ENCODE measurements at regions of chr4 and their contacts with region 1.

Region 1: DNA sequence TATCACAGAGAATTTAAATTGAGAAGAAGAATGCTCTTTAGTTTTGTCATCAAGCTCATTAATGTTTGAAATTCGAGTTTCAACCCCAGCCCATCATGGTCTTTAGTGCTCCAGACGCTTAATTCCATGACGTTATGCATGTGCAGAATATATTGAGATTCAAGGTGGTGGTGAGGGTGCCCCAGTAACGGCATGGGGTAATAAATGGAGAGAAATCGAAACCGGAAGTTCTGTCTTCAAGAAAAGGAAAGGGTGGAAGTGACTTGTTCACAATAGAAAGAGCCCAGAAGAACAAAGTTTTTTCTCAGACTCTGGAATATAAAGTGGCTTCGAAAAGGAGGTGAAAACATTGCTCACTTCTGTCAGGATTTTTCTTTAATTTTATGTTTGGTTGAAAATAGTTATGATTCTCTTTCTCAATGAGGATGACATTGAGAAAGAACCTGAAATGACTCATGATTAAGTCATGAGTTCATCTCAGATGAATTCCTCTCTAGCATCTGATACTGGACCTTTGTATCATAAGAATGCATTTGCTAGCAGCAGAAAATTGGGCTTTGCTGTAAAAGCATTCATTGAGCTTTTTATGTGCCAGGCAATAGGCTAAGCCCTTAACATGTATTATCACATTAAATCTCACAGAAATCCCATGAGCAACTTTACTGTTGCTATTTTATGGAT is 779 bp upstream of the DDX60L start:
- DNase-seq: peak in 34 of 35 experiments; percentile 9 to 83 (median 42)
- ATAC-seq: peak; percentile 58 to 70 (median 64)
- H3K4me3 ChIP-seq: peak overlapping the region; percentile 94 to 97
- H3K4me3 Mint-ChIP-seq: peak overlapping the region; percentile 95 to 100 (median 99)
- H3K27ac ChIP-seq: peak overlapping the region; percentile 91
- H3K27ac Mint-ChIP-seq: peak overlapping the region; percentile 100
- H3K4me1 ChIP-seq: peaks cover 11 to 36% of the 10 kb centered on the region in 2 experiments
- H3K4me1 Mint-ChIP-seq: peaks cover 64 to 77% (median 74%) of the 10 kb centered on the region in 3 donors
- H3K27me3 ChIP-seq: no peaks in the 10 kb centered on the region
- H3K27me3 Mint-ChIP-seq: no peaks in the 10 kb centered on the region

Region 2: DNA sequence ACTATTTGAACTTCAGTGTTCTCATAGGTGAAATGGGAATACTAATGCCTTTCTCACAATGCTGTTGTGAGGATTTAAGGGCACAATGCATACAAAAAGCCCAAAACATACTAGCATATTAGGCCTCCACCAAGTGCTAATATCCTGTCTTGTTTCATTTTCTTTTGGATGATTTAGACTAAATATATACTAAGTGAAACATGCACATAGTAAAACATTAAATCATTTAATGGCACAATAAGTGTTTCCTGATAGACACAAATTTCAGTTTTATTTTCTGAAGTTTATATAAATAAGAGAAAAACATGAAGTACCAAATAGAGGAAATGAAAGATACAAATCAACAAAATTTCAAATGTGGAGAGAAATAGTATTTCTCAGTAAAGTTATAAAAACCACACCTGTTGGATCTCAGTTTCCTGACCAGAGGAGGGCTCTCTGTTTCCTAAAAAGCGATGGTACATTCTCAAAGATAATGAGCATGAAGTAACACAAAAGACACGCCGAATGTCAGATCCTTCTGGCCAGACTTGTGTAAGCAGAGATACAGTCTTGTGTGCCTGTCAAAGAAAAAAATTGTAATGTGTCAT is 187.6 kb before region 1 on chr4:
- CTCF ChIA-PET with region 1: no interaction called
- POLR2A ChIA-PET with region 1: no interaction called
- DNase-seq: no peak
- ATAC-seq: no peak
- H3K4me3 ChIP-seq: no peak overlapping the region
- H3K4me3 Mint-ChIP-seq: no peak overlapping the region
- H3K27ac ChIP-seq: no peak overlapping the region
- H3K27ac Mint-ChIP-seq: no peak overlapping the region
- H3K4me1 ChIP-seq: no peaks in the 10 kb centered on the region
- H3K4me1 Mint-ChIP-seq: peaks cover 4 to 18% (median 9%) of the 10 kb centered on the region in 3 donors
- H3K27me3 ChIP-seq: no peaks in the 10 kb centered on the region
- H3K27me3 Mint-ChIP-seq: no peaks in the 10 kb centered on the region

Region 3: GRCh38 chr4:168514249-168514852 is 33.3 kb after region 1 on chr4:
- CTCF ChIA-PET with region 1: interaction called in 1 of 2 experiments, 18 read pairs
- POLR2A ChIA-PET with region 1: interaction called, 3 to 7 read pairs
- DNase-seq: peak in 1 of 35 experiments; percentile 60
- ATAC-seq: no peak
- H3K4me3 ChIP-seq: no peak overlapping the region
- H3K4me3 Mint-ChIP-seq: no peak overlapping the region
- H3K27ac ChIP-seq: no peak overlapping the region
- H3K27ac Mint-ChIP-seq: no peak overlapping the region
- H3K4me1 ChIP-seq: peaks cover 13 to 24% of the 10 kb centered on the region in 2 experiments
- H3K4me1 Mint-ChIP-seq: peaks cover 25 to 36% (median 29%) of the 10 kb centered on the region in 3 donors
- H3K27me3 ChIP-seq: no peaks in the 10 kb centered on the region
- H3K27me3 Mint-ChIP-seq: no peaks in the 10 kb centered on the region

Region 4: GRCh38 chr4:168598191-168598590 is 117.1 kb after region 1 on chr4:
- CTCF ChIA-PET with region 1: no interaction called
- POLR2A ChIA-PET with region 1: no interaction called
- DNase-seq: no peak
- ATAC-seq: no peak
- H3K4me3 ChIP-seq: no peak overlapping the region
- H3K4me3 Mint-ChIP-seq: no peak overlapping the region
- H3K27ac ChIP-seq: no peak overlapping the region
- H3K27ac Mint-ChIP-seq: no peak overlapping the region
- H3K4me1 ChIP-seq: no peaks in the 10 kb centered on the region
- H3K4me1 Mint-ChIP-seq: no peaks in the 10 kb centered on the region
- H3K27me3 ChIP-seq: peaks cover 0 to 3% of the 10 kb centered on the region in 2 experiments
- H3K27me3 Mint-ChIP-seq: peaks cover 4% of the 10 kb centered on the region in 2 donors

Region 5: GRCh38 chr4:169305651-169306050 is 824.6 kb after region 1 on chr4:
- CTCF ChIA-PET with region 1: no interaction called
- POLR2A ChIA-PET with region 1: no interaction called
- DNase-seq: no peak
- ATAC-seq: no peak
- H3K4me3 ChIP-seq: no peak overlapping the region
- H3K4me3 Mint-ChIP-seq: no peak overlapping the region
- H3K27ac ChIP-seq: no peak overlapping the region
- H3K27ac Mint-ChIP-seq: no peak overlapping the region
- H3K4me1 ChIP-seq: no peaks in the 10 kb centered on the region
- H3K4me1 Mint-ChIP-seq: no peaks in the 10 kb centered on the region
- H3K27me3 ChIP-seq: no peaks in the 10 kb centered on the region
- H3K27me3 Mint-ChIP-seq: peaks cover 3% of the 10 kb centered on the region in 2 donors

Measured in T-cell (primary cell).